CD8-positive, alpha-beta T cell (primary cell): ENCODE measurements at regions of chr14 and their contacts with region 1.

Region 1: GRCh38 chr14:61671082-61671481 is 24.2 kb upstream of the HIF1A start:
- DNase-seq: peak in 4 of 9 experiments; percentile 22 to 89 (median 68)
- ATAC-seq: peak; percentile 94
- H3K4me3 ChIP-seq: peak overlapping the region; percentile 6 to 21
- H3K4me3 Mint-ChIP-seq: no peak overlapping the region
- H3K27ac ChIP-seq: peak overlapping the region; percentile 67 to 98
- H3K27ac Mint-ChIP-seq: no peak overlapping the region
- H3K4me1 ChIP-seq: peaks cover 65% of the 10 kb centered on the region
- H3K4me1 Mint-ChIP-seq: peaks cover 13% of the 10 kb centered on the region
- H3K27me3 ChIP-seq: no peaks in the 10 kb centered on the region
- H3K27me3 Mint-ChIP-seq: no peaks in the 10 kb centered on the region
- CTCF ChIP-seq: no peak

Region 2: GRCh38 chr14:61681413-61681812 is 10.3 kb after region 1 on chr14:
- CTCF ChIA-PET with region 1: no interaction called
- POLR2A ChIA-PET with region 1: interaction called, 6 read pairs
- intact Hi-C with region 1: loop called in 1 of 2 experiments (anchors 2 kb)
- DNase-seq: no peak
- ATAC-seq: no peak
- H3K4me3 ChIP-seq: no peak overlapping the region
- H3K4me3 Mint-ChIP-seq: no peak overlapping the region
- H3K27ac ChIP-seq: no peak overlapping the region
- H3K27ac Mint-ChIP-seq: no peak overlapping the region
- H3K4me1 ChIP-seq: peaks cover 8% of the 10 kb centered on the region
- H3K4me1 Mint-ChIP-seq: peaks cover 5% of the 10 kb centered on the region
- H3K27me3 ChIP-seq: no peaks in the 10 kb centered on the region
- H3K27me3 Mint-ChIP-seq: no peaks in the 10 kb centered on the region
- CTCF ChIP-seq: no peak

Region 3: DNA sequence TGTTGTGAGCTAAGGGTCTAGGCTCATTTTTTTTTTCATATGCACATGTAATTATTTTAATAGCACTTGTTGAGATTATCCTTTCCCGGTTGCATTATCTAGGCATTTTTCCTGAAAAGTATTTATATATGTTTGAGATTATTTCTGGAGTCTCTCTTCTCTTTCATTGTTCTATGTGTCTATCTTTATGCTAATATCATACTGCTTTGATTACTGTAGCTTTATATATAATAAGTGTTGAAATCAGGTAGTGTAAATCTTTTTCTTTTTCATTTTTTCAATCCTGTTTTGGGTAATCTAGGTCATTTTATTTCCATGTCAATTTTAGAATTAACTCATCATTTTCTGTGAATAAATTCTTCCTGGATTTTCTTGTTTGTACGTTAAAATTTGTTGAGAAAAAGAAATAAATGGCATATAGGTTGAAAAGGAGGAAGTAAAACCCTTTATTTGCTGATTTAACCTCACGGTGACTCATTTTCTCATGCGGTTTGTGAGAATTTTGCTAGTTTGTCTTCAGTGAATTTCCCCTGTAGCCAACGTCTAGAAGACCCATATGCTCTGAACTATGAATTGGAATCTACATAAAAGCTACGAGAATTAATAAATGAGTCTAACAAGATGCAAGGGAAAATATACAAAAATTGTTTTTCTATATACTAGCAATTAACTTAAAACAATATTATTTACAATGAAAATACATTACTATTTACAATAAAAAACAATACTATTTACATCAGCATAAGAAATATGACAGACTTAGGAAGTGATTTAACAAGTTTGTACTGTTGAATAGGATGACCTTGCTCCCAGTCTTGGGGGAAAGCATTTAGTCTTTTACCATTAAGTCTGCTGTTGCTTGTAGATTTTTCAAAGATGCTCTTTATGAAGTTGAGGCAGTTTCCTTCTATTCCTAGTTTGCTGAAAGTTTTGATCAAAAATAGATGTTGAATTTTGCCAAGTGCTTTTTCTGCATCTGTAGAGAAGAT is 196.1 kb after region 1 on chr14:
- CTCF ChIA-PET with region 1: no interaction called
- POLR2A ChIA-PET with region 1: no interaction called
- intact Hi-C with region 1: no loop called
- DNase-seq: peak in 2 of 9 experiments; percentile 11 to 23
- ATAC-seq: no peak
- H3K4me3 ChIP-seq: no peak overlapping the region
- H3K4me3 Mint-ChIP-seq: no peak overlapping the region
- H3K27ac ChIP-seq: no peak overlapping the region
- H3K27ac Mint-ChIP-seq: no peak overlapping the region
- H3K4me1 ChIP-seq: no peaks in the 10 kb centered on the region
- H3K4me1 Mint-ChIP-seq: peaks cover 7% of the 10 kb centered on the region
- H3K27me3 ChIP-seq: no peaks in the 10 kb centered on the region
- H3K27me3 Mint-ChIP-seq: peaks cover 4% of the 10 kb centered on the region
- CTCF ChIP-seq: no peak